ENCODE measurements at regions of chr1 and their contacts with region 1.

Region 1: GRCh38 chr1:151909150-151910149 is at the start of gene THEM4:
- DNase-seq: peak; percentile 81 to 90 (median 83)
- H3K4me3 ChIP-seq: peak within 1 kb of the TSS; percentile 76 to 79
- H3K4me3 Mint-ChIP-seq: peak within 1 kb of the TSS; percentile 83 to 91 (median 86)
- H3K27ac ChIP-seq: peak within 1 kb of the TSS; percentile 61
- H3K27ac Mint-ChIP-seq: peak within 1 kb of the TSS; percentile 73 to 94 (median 89)
- H3K4me1 ChIP-seq: peaks cover 53% of the 10 kb centered on the region
- H3K4me1 Mint-ChIP-seq: peaks cover 22 to 48% (median 39%) of the 10 kb centered on the region in 4 donors
- H3K27me3 ChIP-seq: no peaks in the 10 kb centered on the region
- H3K27me3 Mint-ChIP-seq: no peaks in the 10 kb centered on the region
- total RNA-seq, gene THEM4: 105 to 106 TPM

Region 2: GRCh38 chr1:150955280-150955679 is 954.2 kb before region 1 on chr1:
- CTCF ChIA-PET with region 1: no interaction called
- POLR2A ChIA-PET with region 1: no interaction called
- intact Hi-C with region 1: no loop called
- DNase-seq: no peak
- H3K4me3 ChIP-seq: no peak overlapping the region
- H3K4me3 Mint-ChIP-seq: no peak overlapping the region
- H3K27ac ChIP-seq: no peak overlapping the region
- H3K27ac Mint-ChIP-seq: peak overlapping the region in 6 of 7 donors; percentile 4 to 84 (median 56)
- H3K4me1 ChIP-seq: no peaks in the 10 kb centered on the region
- H3K4me1 Mint-ChIP-seq: peaks cover 0 to 2% (median 0%) of the 10 kb centered on the region in 4 donors
- H3K27me3 ChIP-seq: no peaks in the 10 kb centered on the region
- H3K27me3 Mint-ChIP-seq: no peaks in the 10 kb centered on the region

Region 3: GRCh38 chr1:151898513-151898991 is 10.9 kb before region 1 on chr1:
- CTCF ChIA-PET with region 1: interaction called, 48 read pairs
- POLR2A ChIA-PET with region 1: interaction called, 248 read pairs
- intact Hi-C with region 1: no loop called
- DNase-seq: peak; percentile 82 to 86 (median 84)
- H3K4me3 ChIP-seq: peak overlapping the region; percentile 26 to 52
- H3K4me3 Mint-ChIP-seq: peak overlapping the region; percentile 73 to 89 (median 78)
- H3K27ac ChIP-seq: peak overlapping the region; percentile 54
- H3K27ac Mint-ChIP-seq: peak overlapping the region; percentile 90 to 97 (median 94)
- H3K4me1 ChIP-seq: peaks cover 91% of the 10 kb centered on the region
- H3K4me1 Mint-ChIP-seq: peaks cover 56 to 86% (median 68%) of the 10 kb centered on the region in 4 donors
- H3K27me3 ChIP-seq: no peaks in the 10 kb centered on the region
- H3K27me3 Mint-ChIP-seq: no peaks in the 10 kb centered on the region

Region 4: DNA sequence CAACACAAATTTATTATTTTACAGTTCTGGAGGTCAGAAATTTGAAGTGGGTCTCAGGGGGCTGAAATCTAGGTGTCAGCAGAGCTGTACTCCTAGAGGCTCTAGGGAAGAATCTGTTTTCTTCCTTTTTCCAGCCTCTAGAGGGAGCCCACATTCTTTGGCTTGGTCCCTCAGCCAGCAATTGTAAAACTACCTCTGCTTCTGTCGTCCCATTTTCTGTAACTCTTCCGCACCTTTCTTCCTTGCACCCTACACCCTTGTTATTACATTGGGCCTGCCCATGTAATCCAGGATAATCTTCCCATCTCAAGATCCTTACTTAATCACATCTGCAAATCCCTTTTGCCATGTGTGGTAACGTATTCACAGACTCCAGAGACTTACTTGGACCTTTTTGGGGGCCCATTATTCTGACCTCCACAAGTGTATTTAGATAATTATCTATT is 24.6 kb after region 1 on chr1:
- CTCF ChIA-PET with region 1: interaction called, 13 read pairs
- POLR2A ChIA-PET with region 1: interaction called, 6 read pairs
- intact Hi-C with region 1: no loop called
- DNase-seq: peak; percentile 52 to 75 (median 69)
- H3K4me3 ChIP-seq: no peak overlapping the region
- H3K4me3 Mint-ChIP-seq: peak overlapping the region in 1 of 8 donors; percentile 4
- H3K27ac ChIP-seq: no peak overlapping the region
- H3K27ac Mint-ChIP-seq: peak overlapping the region in 5 of 7 donors; percentile 31 to 91 (median 65)
- H3K4me1 ChIP-seq: no peaks in the 10 kb centered on the region
- H3K4me1 Mint-ChIP-seq: peaks cover 4 to 6% (median 4%) of the 10 kb centered on the region in 4 donors
- H3K27me3 ChIP-seq: no peaks in the 10 kb centered on the region
- H3K27me3 Mint-ChIP-seq: peaks cover 0 to 4% of the 10 kb centered on the region in 2 donors

Region 5: GRCh38 chr1:151945725-151946364 is 36.4 kb after region 1 on chr1:
- CTCF ChIA-PET with region 1: no interaction called
- POLR2A ChIA-PET with region 1: interaction called, 23 read pairs
- intact Hi-C with region 1: loop called (anchors 2 kb)
- DNase-seq: peak; percentile 87 to 97 (median 93)
- H3K4me3 ChIP-seq: peak overlapping the region in 1 of 2 donors; percentile 25
- H3K4me3 Mint-ChIP-seq: peak overlapping the region; percentile 49 to 80 (median 67)
- H3K27ac ChIP-seq: peak overlapping the region; percentile 82
- H3K27ac Mint-ChIP-seq: peak overlapping the region; percentile 94 to 98 (median 96)
- H3K4me1 ChIP-seq: peaks cover 53% of the 10 kb centered on the region
- H3K4me1 Mint-ChIP-seq: peaks cover 44 to 48% (median 47%) of the 10 kb centered on the region in 4 donors
- H3K27me3 ChIP-seq: no peaks in the 10 kb centered on the region
- H3K27me3 Mint-ChIP-seq: no peaks in the 10 kb centered on the region

Region 6: GRCh38 chr1:152160576-152160975 is 251.1 kb after region 1 on chr1:
- CTCF ChIA-PET with region 1: no interaction called
- POLR2A ChIA-PET with region 1: no interaction called
- intact Hi-C with region 1: no loop called
- DNase-seq: no peak
- H3K4me3 ChIP-seq: no peak overlapping the region
- H3K4me3 Mint-ChIP-seq: no peak overlapping the region
- H3K27ac ChIP-seq: no peak overlapping the region
- H3K27ac Mint-ChIP-seq: no peak overlapping the region
- H3K4me1 ChIP-seq: no peaks in the 10 kb centered on the region
- H3K4me1 Mint-ChIP-seq: peaks cover 1 to 2% (median 1%) of the 10 kb centered on the region in 4 donors
- H3K27me3 ChIP-seq: peaks cover 6% of the 10 kb centered on the region
- H3K27me3 Mint-ChIP-seq: peaks cover 4 to 8% of the 10 kb centered on the region in 2 donors